ENCODE measurements at regions of chr9 and their contacts with region 1.

Region 1: DNA sequence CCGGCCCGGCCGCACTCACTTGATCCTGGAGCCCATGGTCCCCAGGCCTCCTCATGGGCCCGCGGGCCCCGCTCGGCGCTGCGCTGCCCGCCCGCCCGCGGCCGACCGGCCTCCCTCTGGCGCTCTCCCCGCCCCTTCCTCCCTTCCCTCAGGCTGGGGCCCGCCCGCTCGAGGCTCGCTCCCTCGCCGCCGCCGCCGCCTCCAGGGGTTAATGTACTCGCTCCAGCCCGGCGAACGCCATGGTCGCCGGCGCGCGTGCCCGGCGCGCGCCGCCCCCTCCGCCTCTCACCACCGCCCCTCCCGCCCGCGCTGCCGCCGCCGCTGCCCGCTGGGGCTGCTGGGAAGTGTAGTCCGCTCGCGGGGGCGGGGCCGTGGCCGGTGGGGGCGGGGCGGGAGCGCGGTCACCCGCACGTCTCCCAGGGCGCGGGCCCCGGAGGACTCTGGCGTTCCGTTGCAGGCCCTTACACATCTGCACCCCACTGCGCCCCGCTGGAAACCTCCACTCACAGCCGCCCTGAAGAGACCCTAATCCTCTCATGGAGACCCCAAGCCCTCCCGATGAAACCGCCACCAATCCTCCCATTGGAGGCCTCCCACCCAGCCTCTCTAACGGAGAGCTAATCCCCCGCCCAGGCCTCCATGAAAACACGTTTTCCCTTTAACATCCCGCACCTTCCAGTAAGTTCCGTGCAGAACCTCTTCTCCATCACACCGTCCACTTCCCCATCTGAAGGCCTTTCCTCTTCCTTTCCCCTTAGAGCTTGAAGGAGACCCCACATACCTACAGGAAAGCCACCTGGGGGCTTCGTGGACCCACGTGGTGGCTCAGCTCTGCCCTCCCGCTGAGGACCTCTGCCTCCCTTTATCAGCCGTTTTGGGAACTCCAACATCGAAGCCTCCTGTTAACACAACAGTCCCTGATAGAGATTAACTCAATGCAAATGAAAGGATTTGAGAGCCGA is at the start of gene DENND1A:
- DNase-seq: peak; percentile 84
- ATAC-seq: peak; percentile 96
- H3K4me3 ChIP-seq: peak within 1 kb of the TSS; percentile 46
- H3K27ac ChIP-seq: peak within 1 kb of the TSS; percentile 17; the same call in 1 of the 2 replicates
- H3K4me1 ChIP-seq: peaks cover 8% of the 10 kb centered on the region
- H3K27me3 ChIP-seq: no peaks in the 10 kb centered on the region
- CTCF ChIP-seq: no peak
- POLR2A ChIP-seq: peak; percentile 44; the same call in 1 of the 2 replicates
- RAD21 ChIP-seq: no peak
- total RNA-seq, gene DENND1A: 21.4 and 27.6 TPM in 2 replicates

Region 2: GRCh38 chr9:123138163-123138562 is 792.0 kb before region 1 on chr9:
- CTCF ChIA-PET with region 1: no interaction called
- POLR2A ChIA-PET with region 1: no interaction called
- dilution Hi-C with region 1: no loop called
- in situ Hi-C with region 1: no loop called
- intact Hi-C with region 1: no loop called
- DNase-seq: no peak
- ATAC-seq: no peak
- H3K4me3 ChIP-seq: no peak overlapping the region
- H3K27ac ChIP-seq: no peak overlapping the region
- H3K4me1 ChIP-seq: no peaks in the 10 kb centered on the region
- H3K27me3 ChIP-seq: no peaks in the 10 kb centered on the region
- CTCF ChIP-seq: no peak
- POLR2A ChIP-seq: no peak
- RAD21 ChIP-seq: no peak

Region 3: DNA sequence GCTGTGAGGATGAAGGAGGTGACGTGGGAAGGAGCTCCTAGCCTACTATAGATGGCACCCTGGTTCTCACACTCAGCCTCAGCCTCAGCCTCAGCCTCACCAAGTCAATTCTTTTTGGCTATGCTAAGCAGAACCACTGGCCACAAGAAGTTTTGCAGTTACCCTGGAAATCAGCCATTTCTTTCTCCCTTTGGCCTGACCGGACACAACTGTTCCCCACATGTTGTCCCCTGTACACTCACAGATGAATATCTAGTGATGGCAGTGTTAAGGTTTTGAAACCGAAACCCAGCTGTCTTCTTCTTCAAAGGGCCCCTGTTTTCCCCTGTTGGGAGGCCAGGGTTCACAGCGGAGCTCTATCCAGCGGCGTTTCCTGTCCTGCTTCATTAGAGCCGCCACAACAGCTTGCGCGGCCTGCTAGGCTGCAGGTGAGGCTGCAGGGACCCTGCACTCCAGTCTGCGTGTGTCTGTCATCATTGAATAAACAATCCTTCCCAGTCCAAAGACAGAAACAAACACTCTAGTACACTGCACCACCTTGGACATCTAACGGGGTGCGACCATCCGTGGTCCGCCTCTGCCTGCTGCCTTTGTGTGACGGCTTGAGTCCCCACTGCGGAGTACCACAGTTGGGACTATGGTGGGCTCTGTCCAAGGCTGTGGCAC is 250.7 kb before region 1 on chr9:
- CTCF ChIA-PET with region 1: no interaction called
- POLR2A ChIA-PET with region 1: no interaction called
- dilution Hi-C with region 1: no loop called
- in situ Hi-C with region 1: no loop called
- intact Hi-C with region 1: loop called (anchors 5 kb)
- DNase-seq: peak; percentile 27
- ATAC-seq: no peak
- H3K4me3 ChIP-seq: no peak overlapping the region
- H3K27ac ChIP-seq: no peak overlapping the region
- H3K4me1 ChIP-seq: peaks cover 13% of the 10 kb centered on the region; the same call in 1 of the 2 replicates
- H3K27me3 ChIP-seq: no peaks in the 10 kb centered on the region
- CTCF ChIP-seq: no peak
- POLR2A ChIP-seq: no peak
- RAD21 ChIP-seq: no peak

Measured in IMR-90 (cell line).